RWPE1 (cell line): ENCODE measurements at regions of chr11 and their contacts with region 1.

Region 1: DNA sequence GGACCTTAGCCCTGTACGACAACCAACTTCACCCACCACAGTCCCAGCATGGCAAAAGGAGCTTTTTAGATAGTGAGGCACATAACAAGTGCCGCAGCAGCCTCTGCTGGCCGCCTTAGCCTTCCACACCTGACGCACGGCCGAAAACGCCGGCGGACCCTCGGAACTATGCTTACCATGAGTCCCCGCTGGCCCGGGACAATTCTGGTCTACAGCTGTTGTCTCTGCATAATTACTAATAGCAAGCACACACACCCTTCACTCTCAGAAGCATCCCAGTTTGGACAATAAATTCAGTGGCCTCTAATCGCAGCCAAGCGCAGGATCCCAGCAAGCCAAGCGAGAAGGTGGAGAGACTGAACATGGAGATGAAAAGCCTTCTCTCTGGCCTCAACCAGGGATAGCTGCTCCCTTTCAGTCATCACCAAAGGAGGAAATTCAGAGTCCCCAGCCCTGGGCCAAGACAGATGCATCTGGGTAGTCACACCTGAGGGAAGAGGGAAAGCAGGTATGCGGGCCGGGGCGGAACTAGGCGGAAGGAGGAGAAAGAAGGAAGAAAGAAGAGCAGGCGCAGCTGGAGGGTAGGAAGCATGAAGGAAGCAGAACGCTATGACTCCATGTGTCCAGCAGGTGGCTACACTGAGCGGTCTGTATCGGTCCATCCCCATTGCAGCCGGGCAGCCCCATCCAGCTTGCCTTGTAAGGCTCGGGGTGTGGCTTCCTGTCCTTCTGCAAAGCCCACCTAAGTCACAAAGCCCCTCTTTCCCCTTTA is 40.3 kb downstream of the BUD13 start:
- DNase-seq: peak; percentile 82
- H3K27ac ChIP-seq: no peak overlapping the region
- CTCF ChIP-seq: peak; percentile 83

Region 2: DNA sequence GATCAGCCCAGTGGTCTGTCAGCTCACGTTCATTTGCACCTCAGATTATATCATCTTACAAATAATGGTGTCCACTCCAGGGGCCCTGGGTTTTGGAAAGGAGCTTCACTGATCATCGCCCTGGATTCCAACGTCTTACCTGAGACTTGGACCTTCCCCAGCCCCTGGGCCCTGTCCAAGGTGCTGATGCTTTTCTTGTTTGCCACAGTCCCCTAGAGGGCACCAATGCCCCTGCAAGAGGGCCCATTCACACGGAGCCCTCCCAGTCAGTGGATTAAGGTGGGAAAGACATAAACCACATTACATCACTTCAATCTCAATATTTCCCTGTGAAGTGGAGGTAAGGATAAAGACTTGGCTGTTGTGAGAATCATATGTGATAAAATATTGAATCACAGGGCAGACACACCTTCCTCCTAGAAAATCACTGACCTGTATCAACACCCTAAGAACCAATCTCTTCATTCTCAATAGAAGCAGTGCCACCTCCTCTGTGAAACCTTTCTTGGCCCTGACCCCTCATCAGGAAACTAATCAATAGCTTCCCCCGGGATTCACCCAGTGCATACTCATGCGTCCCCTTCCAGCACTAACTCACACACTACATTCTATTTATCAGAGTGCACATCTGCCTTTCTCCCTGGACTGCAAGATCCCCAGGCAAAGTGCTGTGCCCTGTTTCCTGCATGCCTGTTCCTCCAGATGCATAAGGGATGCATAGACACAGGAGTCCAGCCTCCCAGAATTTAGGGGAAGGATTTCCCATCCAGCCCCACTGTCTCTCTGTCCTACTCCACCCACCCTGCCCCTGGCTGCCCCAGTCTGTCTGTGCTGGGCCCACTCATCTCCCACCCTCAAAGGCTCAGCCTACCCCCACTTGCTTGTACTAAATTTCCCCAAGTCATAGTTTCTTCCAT is 126.7 kb before region 1 on chr11:
- CTCF ChIA-PET with region 1: no interaction called
- POLR2A ChIA-PET with region 1: no interaction called
- DNase-seq: peak; percentile 47
- H3K27ac ChIP-seq: no peak overlapping the region
- CTCF ChIP-seq: no peak; the same call in 1 of the 2 replicates

Region 3: DNA sequence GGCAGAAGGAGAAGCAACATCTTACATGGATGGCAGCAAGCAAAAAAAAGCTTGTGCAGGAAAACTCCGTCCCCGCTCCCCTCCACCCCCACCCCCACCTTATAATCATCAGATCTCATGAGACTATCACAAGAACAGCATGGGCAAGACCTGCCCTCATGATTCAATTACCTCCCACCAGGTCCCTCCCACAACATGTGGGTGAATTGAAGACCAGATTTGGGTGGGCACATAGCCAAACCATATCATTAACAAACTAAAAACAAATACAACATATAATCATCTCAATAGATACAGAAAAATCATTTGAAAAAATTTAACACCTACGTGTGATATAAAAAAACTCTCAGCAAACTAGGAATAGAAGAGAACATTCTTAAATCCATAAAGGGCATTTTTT is 48.5 kb before region 1 on chr11:
- CTCF ChIA-PET with region 1: no interaction called
- POLR2A ChIA-PET with region 1: no interaction called
- DNase-seq: no peak
- H3K27ac ChIP-seq: no peak overlapping the region
- CTCF ChIP-seq: no peak

Region 4: DNA sequence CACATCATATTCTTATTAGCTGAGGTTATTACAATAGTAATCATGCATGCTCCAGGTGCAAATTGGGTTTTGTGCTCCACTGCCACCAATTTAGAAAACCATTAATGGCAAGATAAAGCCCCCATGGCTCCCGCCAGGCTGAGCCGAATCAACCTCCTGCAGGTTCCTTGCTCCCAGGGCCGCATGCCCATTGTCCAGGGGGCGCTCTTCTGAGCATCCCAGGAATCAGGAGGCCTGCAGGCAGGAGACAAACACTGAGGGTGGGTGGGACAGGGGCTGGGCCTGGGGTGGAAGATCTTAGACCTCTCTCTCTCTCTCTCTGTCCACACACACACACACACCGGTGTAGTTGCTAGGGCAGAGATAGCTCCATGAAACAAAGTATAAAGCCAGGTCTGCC is 17.1 kb before region 1 on chr11:
- CTCF ChIA-PET with region 1: interaction called, 21 read pairs
- POLR2A ChIA-PET with region 1: no interaction called
- DNase-seq: no peak
- H3K27ac ChIP-seq: no peak overlapping the region
- CTCF ChIP-seq: no peak

Region 5: GRCh38 chr11:116829525-116830183 is 97.2 kb after region 1 on chr11 and contains the start of gene APOC3:
- CTCF ChIA-PET with region 1: no interaction called
- POLR2A ChIA-PET with region 1: no interaction called
- DNase-seq: no peak
- H3K27ac ChIP-seq: no peak within 1 kb of the TSS
- CTCF ChIP-seq: no peak

Region 6: DNA sequence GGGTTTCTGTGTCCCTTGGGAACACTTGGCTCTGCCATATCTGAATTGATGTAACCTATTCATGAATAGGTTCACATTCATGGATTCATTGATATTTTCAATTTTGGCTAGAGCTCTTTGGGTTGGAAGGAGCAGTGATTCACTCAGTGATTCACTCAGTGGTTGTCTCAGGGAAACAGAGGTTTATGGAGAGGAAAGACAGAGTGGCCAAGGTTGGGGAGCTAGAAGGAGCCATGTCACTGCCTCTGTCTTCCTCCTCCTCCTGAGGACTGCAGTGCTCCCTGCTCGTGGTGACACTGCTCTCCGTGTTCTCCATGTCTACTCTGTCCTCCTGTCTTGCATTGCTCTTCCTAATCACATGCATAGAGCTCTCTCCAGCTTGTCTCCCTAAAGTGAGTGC is 612.6 kb after region 1 on chr11:
- CTCF ChIA-PET with region 1: no interaction called
- POLR2A ChIA-PET with region 1: no interaction called
- DNase-seq: no peak
- H3K27ac ChIP-seq: no peak overlapping the region
- CTCF ChIP-seq: no peak